MCF 10A (cell line): ENCODE measurements at regions of chr11 and their contacts with region 1.

Region 1: GRCh38 chr11:27395556-27396260 is 32.7 kb upstream of the CCDC34 start:
- DNase-seq: peak; percentile 23
- H3K4me3 Mint-ChIP-seq: no peak overlapping the region
- H3K27ac Mint-ChIP-seq: peak overlapping the region; percentile 40
- H3K4me1 Mint-ChIP-seq: peaks cover 31% of the 10 kb centered on the region
- H3K27me3 Mint-ChIP-seq: no peaks in the 10 kb centered on the region
- CTCF ChIP-seq: no peak

Region 2: GRCh38 chr11:27385245-27385644 is 10.5 kb before region 1 on chr11:
- CTCF ChIA-PET with region 1: interaction called, 5 read pairs
- POLR2A ChIA-PET with region 1: interaction called, 15 read pairs
- intact Hi-C with region 1: no loop called
- DNase-seq: peak; percentile 46
- H3K4me3 Mint-ChIP-seq: peak overlapping the region; percentile 38
- H3K27ac Mint-ChIP-seq: peak overlapping the region; percentile 75
- H3K4me1 Mint-ChIP-seq: peaks cover 9% of the 10 kb centered on the region
- H3K27me3 Mint-ChIP-seq: no peaks in the 10 kb centered on the region
- CTCF ChIP-seq: no peak

Region 3: DNA sequence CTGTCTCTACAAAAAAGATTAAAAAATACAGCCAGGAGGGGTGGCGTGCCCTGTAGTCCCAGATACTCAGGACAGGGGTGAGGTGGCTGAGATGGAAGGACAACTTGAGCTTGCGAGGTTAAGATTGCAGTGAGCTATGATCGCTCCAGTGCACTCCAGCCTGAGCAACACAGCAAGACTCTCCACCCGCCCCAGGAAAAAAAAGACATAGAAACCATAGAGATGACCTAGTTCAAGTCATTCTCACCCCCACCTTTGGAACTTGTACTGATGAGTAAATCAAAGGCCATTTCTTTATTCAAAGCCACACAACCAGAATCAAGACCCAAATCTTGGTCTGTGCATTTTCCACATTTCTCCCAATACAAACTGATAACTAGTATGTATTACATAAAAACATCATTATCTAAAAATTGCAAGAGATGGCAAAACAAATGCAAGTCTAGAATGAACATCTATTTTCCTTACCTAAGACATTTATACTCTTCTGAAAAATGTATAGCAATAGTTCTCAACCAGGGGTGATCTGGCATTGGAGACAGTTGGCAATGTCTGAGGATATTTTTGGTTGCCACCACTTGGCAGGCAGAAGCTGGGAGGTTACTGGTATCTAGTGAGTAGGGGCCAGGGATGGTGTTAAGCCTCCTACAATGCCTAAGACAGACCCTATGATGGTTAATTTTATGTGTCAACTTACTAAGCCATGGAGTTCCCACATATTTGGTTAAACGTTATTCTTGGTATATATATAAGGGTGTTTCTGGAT is 42.3 kb after region 1 on chr11:
- CTCF ChIA-PET with region 1: no interaction called
- POLR2A ChIA-PET with region 1: no interaction called
- intact Hi-C with region 1: no loop called
- DNase-seq: no peak
- H3K4me3 Mint-ChIP-seq: no peak overlapping the region
- H3K27ac Mint-ChIP-seq: no peak overlapping the region
- H3K4me1 Mint-ChIP-seq: no peaks in the 10 kb centered on the region
- H3K27me3 Mint-ChIP-seq: no peaks in the 10 kb centered on the region
- CTCF ChIP-seq: no peak